IMR-90 (cell line): ENCODE measurements at regions of chr14 and their contacts with region 1.

Region 1: GRCh38 chr14:80425686-80426085 is 214.4 kb upstream of the DIO2 start:
- DNase-seq: peak; percentile 100
- ATAC-seq: peak; percentile 92
- H3K4me3 ChIP-seq: no peak overlapping the region
- H3K27ac ChIP-seq: no peak overlapping the region; the same call in 1 of the 2 replicates
- H3K4me1 ChIP-seq: peaks cover 10% of the 10 kb centered on the region
- H3K27me3 ChIP-seq: no peaks in the 10 kb centered on the region
- CTCF ChIP-seq: no peak
- POLR2A ChIP-seq: no peak
- RAD21 ChIP-seq: no peak

Region 2: GRCh38 chr14:80475074-80475473 is 49.4 kb after region 1 on chr14:
- CTCF ChIA-PET with region 1: no interaction called
- POLR2A ChIA-PET with region 1: no interaction called
- dilution Hi-C with region 1: no loop called
- in situ Hi-C with region 1: no loop called
- intact Hi-C with region 1: loop called (anchors 2 kb)
- DNase-seq: peak; percentile 82
- ATAC-seq: peak; percentile 74
- H3K4me3 ChIP-seq: no peak overlapping the region
- H3K27ac ChIP-seq: peak overlapping the region; percentile 82
- H3K4me1 ChIP-seq: peaks cover 15% of the 10 kb centered on the region
- H3K27me3 ChIP-seq: no peaks in the 10 kb centered on the region
- CTCF ChIP-seq: no peak
- POLR2A ChIP-seq: no peak
- RAD21 ChIP-seq: no peak